SK-N-SH (cell line): ENCODE measurements at regions of chrX and their contacts with region 1.

Region 1: GRCh38 chrX:106481341-106481740 is 130.4 kb upstream of the RADX start:
- DNase-seq: peak; percentile 33
- H3K4me3 ChIP-seq: no peak overlapping the region; a peak in 1 of 4 replicates
- H3K27ac ChIP-seq: no peak overlapping the region
- H3K4me1 ChIP-seq: no peaks in the 10 kb centered on the region
- H3K27me3 ChIP-seq: no peaks in the 10 kb centered on the region; the same call in 1 of the 2 replicates
- CTCF ChIP-seq: peak; percentile 85
- EP300 ChIP-seq: no peak
- RAD21 ChIP-seq: peak; percentile 70

Region 2: DNA sequence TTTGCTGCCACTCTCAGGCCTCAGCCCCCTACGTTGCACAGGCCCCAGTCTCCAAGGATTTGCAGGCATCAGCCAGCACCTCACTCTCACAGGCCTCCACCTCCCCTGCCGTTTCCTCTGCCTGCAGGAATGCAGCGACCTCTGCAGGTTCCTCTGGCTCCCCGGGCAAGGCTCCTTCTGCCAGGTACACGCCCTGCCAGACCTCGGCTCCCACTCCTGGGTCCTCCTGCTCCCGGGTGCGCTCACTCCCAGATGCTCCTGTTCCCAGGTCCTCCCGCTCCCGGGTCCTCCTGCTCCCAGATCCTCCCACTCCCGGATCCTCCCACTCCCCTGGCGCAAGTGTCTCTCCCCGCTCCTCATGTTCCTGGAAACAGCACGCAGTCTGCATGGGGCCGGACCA is 13.9 kb before region 1 on chrX:
- CTCF ChIA-PET with region 1: interaction called, 11 read pairs
- POLR2A ChIA-PET with region 1: no interaction called
- DNase-seq: no peak
- H3K4me3 ChIP-seq: no peak overlapping the region
- H3K27ac ChIP-seq: no peak overlapping the region
- H3K4me1 ChIP-seq: no peaks in the 10 kb centered on the region
- H3K27me3 ChIP-seq: no peaks in the 10 kb centered on the region; the same call in 1 of the 2 replicates
- CTCF ChIP-seq: no peak
- EP300 ChIP-seq: no peak
- RAD21 ChIP-seq: no peak

Region 3: DNA sequence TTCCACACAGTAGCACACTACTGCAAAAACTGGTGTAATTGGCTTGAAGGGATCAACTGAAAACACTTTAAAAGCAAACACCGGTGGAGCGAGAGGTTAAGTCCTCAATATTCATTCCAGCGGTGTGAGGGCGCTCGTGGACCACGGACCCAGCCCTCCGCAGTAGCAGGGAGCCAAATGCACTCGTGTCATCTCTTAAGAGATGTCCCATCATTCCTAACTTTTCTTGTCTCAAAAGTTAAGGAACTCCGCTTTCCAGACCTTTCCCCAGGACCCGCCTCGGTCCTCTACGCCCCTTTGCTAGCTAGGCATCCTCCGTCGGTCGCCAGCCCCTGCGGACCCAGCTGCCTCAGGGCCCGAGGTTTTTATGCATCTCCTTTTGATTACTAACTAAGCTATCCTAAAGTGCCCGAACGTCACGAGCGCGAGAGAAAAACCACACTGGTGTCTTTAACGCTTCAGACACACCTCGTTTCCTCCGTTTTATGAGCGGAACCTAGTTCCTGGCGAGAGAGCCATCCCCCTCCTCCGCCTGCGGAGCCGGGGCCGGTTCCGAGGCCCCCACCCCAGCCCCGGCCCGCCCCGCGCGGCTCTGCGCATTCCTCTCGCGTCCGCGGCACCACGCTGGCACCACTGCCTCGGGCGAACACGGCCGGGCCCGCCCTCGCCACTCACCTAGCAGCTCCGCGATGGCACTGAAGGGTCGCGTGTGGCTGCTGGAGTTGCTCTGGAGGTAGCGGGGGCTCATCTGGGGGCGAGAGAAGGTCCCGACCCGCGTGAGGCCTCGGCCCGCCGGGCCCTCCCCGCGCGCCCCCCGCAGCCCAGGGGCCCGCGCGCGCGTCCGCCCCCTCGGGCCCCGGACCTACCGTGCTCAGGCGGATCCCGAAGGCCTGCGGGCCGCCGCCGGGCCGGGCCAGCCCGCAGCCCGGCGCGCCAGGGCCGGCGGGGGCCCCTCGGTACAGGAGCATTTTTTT is 517.9 kb after region 1 on chrX:
- CTCF ChIA-PET with region 1: no interaction called
- POLR2A ChIA-PET with region 1: no interaction called
- DNase-seq: peak; percentile 54
- H3K4me3 ChIP-seq: peak overlapping the region; percentile 58 to 65
- H3K27ac ChIP-seq: 0 out of 4 replicates have a peak overlapping the region, but pooled peaks of 1 of the 2 experiments have one; percentile 3
- H3K4me1 ChIP-seq: no peaks in the 10 kb centered on the region; a peak in 1 of 4 replicates
- H3K27me3 ChIP-seq: peaks cover 21% of the 10 kb centered on the region
- CTCF ChIP-seq: peak; percentile 58
- EP300 ChIP-seq: no peak
- RAD21 ChIP-seq: peak; percentile 73